ENCODE measurements at regions of chr17 and their contacts with region 1.

Region 1: GRCh38 chr17:78840725-78841611 is at the start of gene USP36:
- DNase-seq: peak; percentile 94
- ATAC-seq: peak; percentile 97
- H3K4me3 ChIP-seq: peak within 1 kb of the TSS; percentile 88 to 94
- H3K27ac ChIP-seq: peak within 1 kb of the TSS; percentile 92
- H3K4me1 ChIP-seq: peaks cover 24% of the 10 kb centered on the region
- H3K27me3 ChIP-seq: no peaks in the 10 kb centered on the region
- CTCF ChIP-seq: no peak
- total RNA-seq, gene USP36: 113 TPM

Region 2: DNA sequence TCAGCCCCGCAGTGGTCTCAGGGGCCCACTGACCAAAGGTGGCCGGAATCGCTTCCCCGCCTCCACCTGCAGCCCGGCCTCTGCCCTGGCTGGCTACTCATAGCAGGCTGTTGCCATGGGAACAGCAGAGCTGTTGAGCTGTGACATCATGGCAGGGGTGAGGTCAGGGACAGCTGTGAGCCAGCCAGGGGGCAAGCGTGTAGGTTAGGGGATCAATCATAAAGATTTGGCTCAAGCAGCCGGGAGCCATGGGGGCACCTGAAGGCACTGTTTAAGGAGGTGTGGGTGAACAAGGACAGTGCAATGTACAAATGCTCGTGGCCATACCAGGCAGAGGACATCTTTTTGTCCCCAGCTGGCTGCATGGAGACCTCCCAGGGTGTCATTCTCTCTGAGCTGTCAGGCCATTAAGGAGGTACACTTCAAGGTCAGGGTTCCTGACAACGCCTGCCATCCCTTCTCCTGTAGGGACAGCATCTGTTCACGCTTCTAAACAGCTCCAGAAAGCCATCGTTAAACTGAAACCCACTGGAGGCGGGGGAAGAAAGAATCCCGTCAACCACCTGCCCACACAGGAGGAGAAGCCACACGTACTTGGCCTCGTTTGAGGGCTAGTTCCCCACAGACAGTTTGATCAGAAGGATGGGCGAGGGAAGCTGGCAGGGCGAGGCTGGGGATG is 62.3 kb after region 1 on chr17 and contains the start of gene CEP295NL:
- CTCF ChIA-PET with region 1: no interaction called
- POLR2A ChIA-PET with region 1: interaction called, 21 read pairs
- in situ Hi-C with region 1: no loop called
- intact Hi-C with region 1: no loop called
- DNase-seq: no peak
- ATAC-seq: 0 out of 2 replicates have a peak, but pooled peaks have one; percentile 19
- H3K4me3 ChIP-seq: no peak within 1 kb of the TSS
- H3K27ac ChIP-seq: no peak within 1 kb of the TSS
- H3K4me1 ChIP-seq: no peaks in the 10 kb centered on the region; the same call in 1 of the 2 replicates
- H3K27me3 ChIP-seq: no peaks in the 10 kb centered on the region
- CTCF ChIP-seq: no peak
- total RNA-seq, gene CEP295NL: 0.87 TPM

Region 3: GRCh38 chr17:79147746-79148506 is 307.0 kb after region 1 on chr17:
- CTCF ChIA-PET with region 1: no interaction called
- POLR2A ChIA-PET with region 1: no interaction called
- in situ Hi-C with region 1: no loop called
- intact Hi-C with region 1: no loop called
- DNase-seq: no peak
- ATAC-seq: no peak
- H3K4me3 ChIP-seq: no peak overlapping the region
- H3K27ac ChIP-seq: no peak overlapping the region
- H3K4me1 ChIP-seq: peaks cover 6% of the 10 kb centered on the region
- H3K27me3 ChIP-seq: no peaks in the 10 kb centered on the region; the same call in 1 of the 2 replicates
- CTCF ChIP-seq: no peak

Region 4: GRCh38 chr17:79220713-79221291 is 379.8 kb after region 1 on chr17:
- CTCF ChIA-PET with region 1: no interaction called
- POLR2A ChIA-PET with region 1: no interaction called
- in situ Hi-C with region 1: no loop called
- intact Hi-C with region 1: no loop called
- DNase-seq: no peak
- ATAC-seq: peak; percentile 59
- H3K4me3 ChIP-seq: peak overlapping the region in 1 of 2 experiments; percentile 10; a peak in 2 of 4 replicates
- H3K27ac ChIP-seq: no peak overlapping the region
- H3K4me1 ChIP-seq: peaks cover 4% of the 10 kb centered on the region; the same call in 1 of the 2 replicates
- H3K27me3 ChIP-seq: peaks cover 14% of the 10 kb centered on the region
- CTCF ChIP-seq: no peak

Measured in Panc1 (cell line).